Naive thymus-derived CD8-positive, alpha-beta T cell (primary cell): ENCODE measurements at regions of chr2 and their contacts with region 1.

Region 1: DNA sequence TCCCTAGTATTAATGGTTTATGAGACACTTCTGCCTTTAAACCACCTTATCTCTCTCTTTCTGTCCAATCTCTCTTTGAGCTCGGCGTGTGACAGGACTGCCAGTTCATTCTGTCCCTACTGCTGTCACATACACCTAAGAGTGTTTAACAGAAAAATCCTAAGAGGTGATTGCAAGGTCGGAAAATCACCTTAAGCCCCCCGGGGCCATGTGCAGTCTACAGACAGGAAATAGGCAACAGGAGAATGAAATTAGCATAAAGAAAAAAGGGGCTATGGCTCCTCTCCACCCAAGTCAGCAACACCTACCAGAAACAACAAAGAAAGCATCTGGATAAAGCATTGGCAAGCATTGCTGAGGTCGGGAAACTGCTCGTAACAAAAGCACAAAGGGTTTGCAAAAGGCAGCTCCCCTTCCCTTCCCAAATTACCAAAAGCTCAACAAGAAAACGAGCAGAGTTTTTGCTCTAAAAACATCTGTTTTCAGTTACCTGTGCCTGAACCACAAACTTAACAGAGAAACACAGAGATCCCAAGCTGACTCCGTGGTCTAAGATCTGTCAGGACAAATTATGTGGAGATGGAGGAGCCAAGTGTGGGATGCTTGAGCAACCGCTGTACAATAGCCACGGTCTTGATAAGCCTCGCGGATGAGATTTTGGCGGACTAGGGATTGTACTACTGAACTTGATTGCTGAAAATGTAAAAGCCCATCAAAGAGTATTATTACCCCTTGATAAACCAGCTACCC is 30.4 kb downstream of the ANKRD44 start:
- DNase-seq: no peak
- ATAC-seq: peak; percentile 64 to 84
- H3K4me3 Mint-ChIP-seq: peak overlapping the region; percentile 57 to 85 (median 80)
- H3K27ac Mint-ChIP-seq: peak overlapping the region; percentile 90 to 96 (median 94)
- H3K4me1 Mint-ChIP-seq: peaks cover 51 to 91% (median 86%) of the 10 kb centered on the region in 4 donors
- H3K27me3 Mint-ChIP-seq: no peaks in the 10 kb centered on the region

Region 2: GRCh38 chr2:197293252-197294007 is 13.3 kb after region 1 on chr2:
- POLR2A ChIA-PET with region 1: interaction called, 10 read pairs
- DNase-seq: no peak
- ATAC-seq: peak; percentile 59 to 62
- H3K4me3 Mint-ChIP-seq: peak overlapping the region; percentile 67 to 94 (median 78)
- H3K27ac Mint-ChIP-seq: peak overlapping the region; percentile 93 to 98 (median 95)
- H3K4me1 Mint-ChIP-seq: peaks cover 54 to 97% (median 86%) of the 10 kb centered on the region in 4 donors
- H3K27me3 Mint-ChIP-seq: no peaks in the 10 kb centered on the region

Region 3: GRCh38 chr2:197453161-197453914 is 173.2 kb after region 1 on chr2 and contains the start of gene COQ10B:
- POLR2A ChIA-PET with region 1: no interaction called
- DNase-seq: peak; percentile 92 to 99 (median 98)
- ATAC-seq: peak; percentile 85 to 88
- H3K4me3 Mint-ChIP-seq: peak within 1 kb of the TSS; percentile 98 to 100 (median 100)
- H3K27ac Mint-ChIP-seq: peak within 1 kb of the TSS; percentile 100
- H3K4me1 Mint-ChIP-seq: peaks cover 22 to 54% (median 47%) of the 10 kb centered on the region in 4 donors
- H3K27me3 Mint-ChIP-seq: no peaks in the 10 kb centered on the region
- polyA plus RNA-seq, gene COQ10B: 30.0 to 43.4 (median 39.4) TPM